Activated T-helper 2 cell treated with anti-CD3 and anti-CD28 coated beads, Interferon-gamma antibody, Interleukin-2, Interleukin-4, amounts not matched to agents 10 μg/mL and 5 μg/mL and 100 μg/mL, durations not matched to agents 14 hours and 24 hours and 36 hours (primary cell): ENCODE measurements at regions of chr19 and their contacts with region 1.

Region 1: DNA sequence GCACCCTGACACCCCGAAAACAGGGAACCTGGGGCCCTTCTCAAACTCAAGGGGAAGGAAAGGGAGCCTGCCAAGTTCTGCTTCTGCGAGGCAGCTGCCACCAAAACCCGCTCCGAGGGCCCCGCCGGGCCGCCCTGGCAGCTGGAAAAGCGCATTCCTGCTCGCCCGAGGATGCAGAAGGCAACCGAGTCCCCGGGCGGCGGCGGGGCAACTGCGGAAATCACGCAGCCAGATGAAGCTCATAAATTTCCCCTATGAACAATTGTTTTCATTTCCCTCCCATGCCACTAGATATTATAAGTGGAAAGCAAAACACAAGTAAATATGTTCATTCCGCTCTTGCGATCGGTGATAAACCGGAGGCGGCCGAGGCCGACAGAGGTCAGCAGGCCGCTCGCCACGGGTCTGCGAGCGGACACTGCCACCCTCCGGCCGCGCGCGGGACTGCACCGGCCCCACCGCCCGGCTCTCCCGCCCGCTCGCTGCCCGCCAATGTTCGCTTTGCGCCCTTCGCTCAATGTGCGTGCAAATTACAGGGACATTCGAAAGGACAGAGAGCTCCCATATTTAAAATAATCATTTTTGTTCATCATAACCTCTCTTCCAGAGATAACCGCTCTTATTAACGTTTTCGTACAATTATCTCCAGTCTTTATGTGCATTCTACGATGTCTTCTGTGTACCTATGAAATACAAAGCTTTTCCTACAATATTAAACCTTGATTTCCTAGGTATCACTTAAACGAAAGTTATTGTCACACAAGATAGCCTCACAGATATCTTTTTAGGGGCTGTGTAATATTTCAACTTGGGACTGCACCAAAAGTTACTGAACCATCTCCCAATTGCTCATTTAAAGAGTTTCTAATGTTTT is 120.8 kb upstream of the ZNF507 start:
- DNase-seq: peak; percentile 26
- H3K4me3 Mint-ChIP-seq: peak overlapping the region; percentile 64
- H3K27ac Mint-ChIP-seq: no peak overlapping the region
- H3K4me1 Mint-ChIP-seq: peaks cover 5% of the 10 kb centered on the region
- H3K27me3 Mint-ChIP-seq: peaks cover 22% of the 10 kb centered on the region

Region 2: DNA sequence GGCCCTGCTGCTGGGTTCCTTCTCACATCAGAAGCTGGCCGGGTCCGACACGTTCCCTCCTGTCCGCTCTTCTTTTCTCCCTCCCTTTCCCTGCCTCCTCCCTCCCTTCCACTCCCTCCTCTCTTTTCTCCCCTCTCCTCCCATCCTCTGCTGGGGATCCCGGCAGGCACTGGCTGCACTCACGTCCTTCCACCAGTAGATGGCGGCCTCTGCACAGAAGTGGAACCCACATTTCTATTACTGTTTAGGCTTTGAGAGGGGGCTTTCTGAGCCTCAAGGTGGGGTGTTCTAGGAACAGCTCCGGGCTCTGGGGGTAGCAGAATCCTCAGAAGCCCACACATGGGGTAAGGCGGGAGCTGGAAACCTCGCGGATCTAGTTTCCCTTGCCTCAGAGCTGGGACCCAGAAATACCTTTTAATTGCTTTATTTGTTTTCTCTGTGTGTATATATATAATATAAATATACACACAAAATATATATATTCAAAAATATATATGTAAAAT is 1558.3 kb before region 1 on chr19:
- intact Hi-C with region 1: loop called (anchors 2 kb)
- DNase-seq: no peak
- H3K4me3 Mint-ChIP-seq: no peak overlapping the region
- H3K27ac Mint-ChIP-seq: no peak overlapping the region
- H3K4me1 Mint-ChIP-seq: no peaks in the 10 kb centered on the region
- H3K27me3 Mint-ChIP-seq: peaks cover 7% of the 10 kb centered on the region

Region 3: DNA sequence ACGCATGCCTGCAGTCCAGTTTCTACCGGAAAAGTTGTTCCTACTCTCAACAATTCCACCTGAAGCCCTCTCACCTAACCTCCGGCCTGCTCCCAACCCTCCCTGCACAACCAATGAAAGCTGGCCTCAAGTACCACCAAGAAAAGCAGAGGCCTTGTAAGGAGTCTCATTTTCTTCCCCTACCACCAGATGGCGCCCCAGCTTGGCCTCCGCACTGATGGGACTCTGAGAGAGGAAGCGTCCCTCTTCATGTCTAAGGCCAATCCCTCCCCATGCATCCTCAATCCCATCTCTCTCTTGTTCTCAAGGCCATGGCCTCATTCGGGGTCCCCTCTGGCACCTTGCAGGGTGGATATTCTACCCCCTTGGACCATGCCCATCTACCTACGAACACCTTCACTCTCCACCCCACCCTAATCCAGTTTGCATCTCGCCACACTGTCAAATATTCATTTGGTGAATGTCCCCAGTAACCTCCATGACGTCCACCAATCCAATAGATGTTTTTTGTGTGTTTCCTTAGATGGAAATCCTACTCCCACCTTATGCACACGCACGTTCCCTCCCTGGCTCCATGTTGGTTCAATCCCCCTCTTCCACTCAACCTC is 1439.7 kb before region 1 on chr19:
- intact Hi-C with region 1: loop called (anchors 5 kb)
- DNase-seq: peak; percentile 29
- H3K4me3 Mint-ChIP-seq: no peak overlapping the region
- H3K27ac Mint-ChIP-seq: no peak overlapping the region
- H3K4me1 Mint-ChIP-seq: peaks cover 2% of the 10 kb centered on the region
- H3K27me3 Mint-ChIP-seq: no peaks in the 10 kb centered on the region